ENCODE measurements at regions of chr17 and their contacts with region 1.

Region 1: DNA sequence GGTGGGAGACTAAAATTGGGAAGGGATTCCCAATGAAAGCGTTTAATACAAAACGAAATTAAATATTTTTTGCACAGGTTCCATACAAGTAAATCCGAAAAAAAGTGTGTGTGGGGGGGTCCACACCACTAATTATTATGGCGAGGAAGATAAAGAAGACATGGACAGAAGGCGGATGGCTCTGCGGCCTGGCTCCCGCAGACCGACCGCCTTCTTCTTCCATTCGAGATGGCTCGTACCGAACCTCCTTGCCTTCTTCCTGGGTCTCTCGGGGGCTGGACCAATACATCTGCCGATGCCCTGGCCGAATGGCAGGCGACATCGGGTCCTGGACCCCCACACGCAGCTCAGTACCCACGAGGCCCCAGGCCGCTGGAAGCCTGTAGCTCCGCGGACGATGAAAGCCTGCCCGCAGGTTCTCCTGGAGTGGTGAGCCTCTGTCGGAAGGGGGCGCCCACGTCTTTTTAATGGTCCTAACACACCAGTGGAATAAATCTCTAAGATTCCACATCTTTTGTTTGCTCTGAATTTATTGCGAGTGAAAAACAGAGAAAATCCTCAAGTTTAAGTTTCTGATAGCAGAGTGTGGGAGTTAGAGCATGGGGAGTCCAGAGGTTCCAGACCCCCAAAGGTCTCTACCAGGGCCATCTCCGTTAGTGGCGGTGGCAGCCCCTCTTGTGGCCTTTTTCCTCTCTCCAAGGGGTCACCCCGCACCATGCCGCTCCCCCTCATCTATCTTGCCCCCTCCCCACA is 1.4 kb downstream of the PRAC2 start:
- DNase-seq: peak; percentile 56 to 81 (median 78)
- ATAC-seq: peak; percentile 74
- H3K4me3 ChIP-seq: peak overlapping the region in 1 of 2 experiments; percentile 36
- H3K4me3 Mint-ChIP-seq: peak overlapping the region; percentile 69
- H3K27ac ChIP-seq: no peak overlapping the region
- H3K27ac Mint-ChIP-seq: no peak overlapping the region
- H3K4me1 ChIP-seq: peaks cover 53% of the 10 kb centered on the region
- H3K4me1 Mint-ChIP-seq: peaks cover 52% of the 10 kb centered on the region
- H3K27me3 ChIP-seq: peaks cover 86 to 89% of the 10 kb centered on the region in 2 experiments
- H3K27me3 Mint-ChIP-seq: peaks cover 72% of the 10 kb centered on the region
- CTCF ChIP-seq: peak; percentile 75

Region 2: GRCh38 chr17:48593840-48594537 is 130.4 kb before region 1 on chr17:
- CTCF ChIA-PET with region 1: no interaction called
- POLR2A ChIA-PET with region 1: no interaction called
- intact Hi-C with region 1: no loop called
- DNase-seq: peak; percentile 69 to 88 (median 80)
- ATAC-seq: peak; percentile 76
- H3K4me3 ChIP-seq: peak overlapping the region in 1 of 2 experiments; percentile 46
- H3K4me3 Mint-ChIP-seq: peak overlapping the region; percentile 81
- H3K27ac ChIP-seq: no peak overlapping the region
- H3K27ac Mint-ChIP-seq: no peak overlapping the region
- H3K4me1 ChIP-seq: peaks cover 41% of the 10 kb centered on the region
- H3K4me1 Mint-ChIP-seq: peaks cover 46% of the 10 kb centered on the region
- H3K27me3 ChIP-seq: peaks cover 43 to 55% of the 10 kb centered on the region in 2 experiments
- H3K27me3 Mint-ChIP-seq: peaks cover 82% of the 10 kb centered on the region
- CTCF ChIP-seq: peak; percentile 85

Region 3: DNA sequence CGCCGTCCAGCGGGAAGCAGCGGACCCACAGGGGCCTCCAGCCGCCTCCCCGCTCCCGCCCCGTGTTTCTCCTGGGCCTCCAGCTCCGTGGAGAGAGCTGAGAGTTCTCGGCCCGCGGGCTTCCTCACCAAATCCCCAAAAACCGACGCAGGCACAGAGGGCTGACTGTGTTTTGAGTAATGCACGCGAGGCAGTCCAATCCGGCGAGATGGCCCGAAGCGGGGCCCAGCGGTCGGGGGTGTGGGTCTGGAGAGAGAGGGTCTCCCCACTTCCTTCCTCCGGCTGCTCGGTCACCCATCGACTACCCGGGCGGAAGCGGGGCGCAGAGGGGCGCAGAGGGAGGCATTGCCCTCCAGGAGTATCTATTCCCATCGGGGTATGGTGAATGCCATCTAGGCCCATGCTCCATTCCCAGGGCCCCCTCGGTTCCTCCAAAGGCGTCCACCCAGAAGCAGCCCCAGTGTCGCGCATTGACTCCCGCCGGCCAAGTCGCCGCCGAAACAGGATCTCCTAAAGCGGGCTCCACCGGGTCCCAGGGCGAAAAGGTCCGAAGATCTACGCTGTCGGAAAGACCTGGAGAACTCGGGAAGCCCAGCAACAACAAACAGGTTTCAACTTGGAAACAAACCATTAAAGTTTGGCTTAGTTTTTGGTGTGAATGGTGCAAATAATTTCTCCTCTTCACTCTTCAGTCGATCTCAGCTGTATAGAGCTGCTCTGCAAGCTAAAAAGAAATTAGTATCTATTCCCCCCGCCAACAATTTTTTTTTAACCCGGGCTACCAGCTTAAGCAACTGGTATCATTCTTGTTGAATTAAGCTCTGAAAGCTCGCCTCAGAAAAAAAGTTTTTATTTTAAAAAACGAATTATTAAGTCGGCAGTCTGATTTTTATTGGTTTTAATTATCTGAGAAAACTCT is 23.3 kb after region 1 on chr17:
- CTCF ChIA-PET with region 1: interaction called, 18 read pairs
- POLR2A ChIA-PET with region 1: interaction called, 4 read pairs
- intact Hi-C with region 1: loop called in 1 of 2 experiments (anchors 2 kb)
- DNase-seq: no peak
- ATAC-seq: no peak
- H3K4me3 ChIP-seq: no peak overlapping the region
- H3K4me3 Mint-ChIP-seq: no peak overlapping the region
- H3K27ac ChIP-seq: no peak overlapping the region
- H3K27ac Mint-ChIP-seq: no peak overlapping the region
- H3K4me1 ChIP-seq: peaks cover 5% of the 10 kb centered on the region
- H3K4me1 Mint-ChIP-seq: peaks cover 16% of the 10 kb centered on the region
- H3K27me3 ChIP-seq: peaks cover 60 to 64% of the 10 kb centered on the region in 2 experiments
- H3K27me3 Mint-ChIP-seq: peaks cover 87% of the 10 kb centered on the region
- CTCF ChIP-seq: no peak

Region 4: DNA sequence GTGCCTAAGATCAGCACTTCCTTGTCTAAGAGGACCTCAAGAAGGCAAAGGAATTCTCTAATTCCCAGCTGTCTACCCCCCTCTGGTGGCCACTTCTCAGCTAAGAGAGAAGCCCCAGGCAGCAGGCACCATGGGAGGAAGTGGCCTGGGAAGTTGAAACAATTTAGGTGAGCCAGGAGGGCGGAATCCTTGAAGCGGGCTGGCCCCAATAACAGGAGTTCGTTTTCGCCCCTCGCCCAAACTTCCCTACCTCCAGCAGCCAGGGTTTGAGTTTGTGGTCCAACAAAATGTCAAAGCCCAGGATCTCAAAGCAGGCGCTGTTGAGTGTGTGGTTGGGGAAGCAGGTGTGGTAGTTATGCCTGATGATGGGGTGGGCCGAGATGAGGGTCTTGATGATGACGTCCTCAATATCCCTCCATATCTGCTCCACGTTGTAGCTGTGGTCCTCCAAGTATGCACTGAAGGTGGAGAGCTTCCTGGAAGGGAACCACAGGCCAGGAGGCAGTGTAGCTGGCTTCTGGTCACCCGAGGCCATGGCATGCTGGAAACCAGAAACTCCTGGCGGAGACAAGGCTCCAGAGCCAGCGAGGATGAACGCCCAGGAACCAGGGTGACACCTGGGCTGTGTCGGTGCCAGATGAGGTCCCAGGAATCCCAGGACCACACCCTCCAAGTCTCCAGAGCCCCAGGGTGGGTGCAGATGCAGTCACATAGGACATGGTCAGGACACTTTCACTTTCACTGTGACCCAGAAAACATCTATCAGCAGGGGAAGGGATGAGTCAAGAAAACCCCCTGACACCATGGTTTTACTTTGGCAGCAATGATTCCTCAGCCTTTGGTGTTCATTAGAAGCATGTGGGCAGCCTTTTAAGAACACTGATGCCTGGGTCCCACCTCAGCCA is 67.0 kb after region 1 on chr17:
- CTCF ChIA-PET with region 1: interaction called, 8 read pairs
- POLR2A ChIA-PET with region 1: interaction called, 3 read pairs
- intact Hi-C with region 1: loop called (anchors 1 to 2 kb)
- DNase-seq: peak in 4 of 9 experiments; percentile 16 to 49 (median 24)
- ATAC-seq: no peak
- H3K4me3 ChIP-seq: no peak overlapping the region
- H3K4me3 Mint-ChIP-seq: no peak overlapping the region
- H3K27ac ChIP-seq: no peak overlapping the region
- H3K27ac Mint-ChIP-seq: no peak overlapping the region
- H3K4me1 ChIP-seq: peaks cover 8% of the 10 kb centered on the region
- H3K4me1 Mint-ChIP-seq: peaks cover 3% of the 10 kb centered on the region
- H3K27me3 ChIP-seq: peaks cover 2 to 3% of the 10 kb centered on the region in 2 experiments
- H3K27me3 Mint-ChIP-seq: peaks cover 43% of the 10 kb centered on the region
- CTCF ChIP-seq: no peak

Region 5: GRCh38 chr17:48997083-48997826 is 272.8 kb after region 1 on chr17 and contains the start of gene IGF2BP1:
- CTCF ChIA-PET with region 1: no interaction called
- POLR2A ChIA-PET with region 1: no interaction called
- intact Hi-C with region 1: loop called in 1 of 2 experiments (anchors 10 kb)
- DNase-seq: peak in 3 of 9 experiments; percentile 34 to 51 (median 45)
- ATAC-seq: peak; percentile 21
- H3K4me3 ChIP-seq: peak within 1 kb of the TSS; percentile 3 to 29
- H3K4me3 Mint-ChIP-seq: peak within 1 kb of the TSS; percentile 65
- H3K27ac ChIP-seq: no peak within 1 kb of the TSS
- H3K27ac Mint-ChIP-seq: no peak within 1 kb of the TSS
- H3K4me1 ChIP-seq: peaks cover 31% of the 10 kb centered on the region
- H3K4me1 Mint-ChIP-seq: peaks cover 28% of the 10 kb centered on the region
- H3K27me3 ChIP-seq: peaks cover 79 to 80% of the 10 kb centered on the region in 2 experiments
- H3K27me3 Mint-ChIP-seq: peaks cover 80% of the 10 kb centered on the region
- CTCF ChIP-seq: no peak
- total RNA-seq, gene IGF2BP1: not detected